ENCODE measurements at regions of chr12 and their contacts with region 1.

Region 1: GRCh38 chr12:50084775-50085614 is at the start of gene SMARCD1:
- DNase-seq: peak; percentile 66
- ATAC-seq: peak; percentile 91
- H3K4me3 ChIP-seq: peak within 1 kb of the TSS; percentile 76
- H3K27ac ChIP-seq: peak within 1 kb of the TSS; percentile 85
- H3K4me1 ChIP-seq: no peaks in the 10 kb centered on the region
- H3K27me3 ChIP-seq: no peaks in the 10 kb centered on the region
- CTCF ChIP-seq: peak; percentile 65 to 92 (median 72)
- EP300 ChIP-seq: no peak; a peak in 1 of 4 replicates
- POLR2A ChIP-seq: peak; percentile 78
- RAD21 ChIP-seq: no peak
- polyA plus RNA-seq, gene SMARCD1: 1.4 to 2.9 TPM

Region 2: DNA sequence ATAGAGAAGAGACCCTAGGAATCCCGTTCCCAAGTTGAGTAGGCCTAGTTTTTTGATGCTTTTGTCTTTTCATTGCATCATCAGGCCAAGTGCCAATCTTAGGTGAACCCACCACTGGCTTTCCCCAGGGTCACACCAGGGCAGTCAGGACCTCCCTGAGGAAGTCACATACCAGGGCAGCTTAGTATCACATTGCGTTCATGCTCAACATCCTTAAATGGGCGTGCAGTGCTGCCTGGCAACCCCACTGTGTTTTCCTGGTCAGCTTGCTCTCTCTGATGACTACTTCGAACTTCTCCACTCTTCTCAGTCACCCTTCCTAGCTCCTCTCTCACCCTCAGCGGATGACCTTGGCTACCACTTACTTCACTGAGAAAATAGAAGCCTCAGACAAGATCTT is 18.6 kb before region 1 on chr12:
- CTCF ChIA-PET with region 1: interaction called, 21 read pairs
- POLR2A ChIA-PET with region 1: no interaction called
- RAD21 ChIA-PET with region 1: interaction called, 3 read pairs
- SMC1A ChIA-PET with region 1: interaction called, 6 read pairs
- in situ Hi-C with region 1: no loop called
- intact Hi-C with region 1: no loop called
- DNase-seq: no peak
- ATAC-seq: peak; percentile 65
- H3K4me3 ChIP-seq: no peak overlapping the region
- H3K27ac ChIP-seq: no peak overlapping the region
- H3K4me1 ChIP-seq: no peaks in the 10 kb centered on the region
- H3K27me3 ChIP-seq: no peaks in the 10 kb centered on the region; a peak in 2 of 4 replicates
- CTCF ChIP-seq: no peak
- EP300 ChIP-seq: no peak
- POLR2A ChIP-seq: no peak
- RAD21 ChIP-seq: no peak

Region 3: DNA sequence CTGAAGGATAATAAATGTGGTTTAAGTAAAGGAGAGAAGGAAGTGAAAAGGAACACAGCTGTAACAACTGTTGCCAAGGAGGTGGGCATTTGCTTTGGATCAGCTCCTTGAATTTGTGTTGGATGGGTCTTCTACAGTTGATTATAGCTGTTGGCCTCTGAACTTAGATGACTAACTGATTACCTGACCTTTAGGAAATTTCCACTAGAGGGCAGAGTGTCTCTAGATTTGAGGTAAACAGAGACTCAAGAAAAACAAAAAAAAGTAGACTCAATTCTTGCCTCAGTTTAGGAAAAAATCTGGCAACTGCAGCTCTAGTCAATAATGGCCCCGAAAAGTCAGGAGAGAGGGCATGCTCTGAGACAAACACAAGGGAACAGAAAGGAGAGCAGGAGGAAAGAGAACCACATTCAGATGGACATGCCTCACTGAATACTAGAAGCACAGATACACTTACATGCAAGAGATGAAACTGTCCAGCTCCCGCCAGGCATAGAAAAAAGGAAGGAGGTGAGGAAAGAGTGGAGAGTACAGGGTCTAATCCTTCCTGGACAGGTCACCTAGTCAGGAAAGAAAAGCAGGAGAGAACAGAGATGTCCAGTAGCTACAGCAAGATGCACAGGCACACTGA is 47.6 kb after region 1 on chr12:
- CTCF ChIA-PET with region 1: interaction called, 21 read pairs
- POLR2A ChIA-PET with region 1: no interaction called
- RAD21 ChIA-PET with region 1: interaction called, 5 read pairs
- SMC1A ChIA-PET with region 1: interaction called, 6 read pairs
- in situ Hi-C with region 1: no loop called
- intact Hi-C with region 1: no loop called
- DNase-seq: no peak
- ATAC-seq: peak; percentile 51
- H3K4me3 ChIP-seq: no peak overlapping the region
- H3K27ac ChIP-seq: no peak overlapping the region
- H3K4me1 ChIP-seq: no peaks in the 10 kb centered on the region
- H3K27me3 ChIP-seq: no peaks in the 10 kb centered on the region
- CTCF ChIP-seq: peak; percentile 37 to 47 (median 46); a peak in 4 of 6 replicates
- EP300 ChIP-seq: no peak
- POLR2A ChIP-seq: no peak
- RAD21 ChIP-seq: peak; percentile 48

Region 4: GRCh38 chr12:50174971-50175715 is 90.1 kb after region 1 on chr12:
- CTCF ChIA-PET with region 1: interaction called, 97 read pairs
- POLR2A ChIA-PET with region 1: interaction called, 5 read pairs
- RAD21 ChIA-PET with region 1: interaction called, 8 read pairs
- SMC1A ChIA-PET with region 1: interaction called, 26 read pairs
- in situ Hi-C with region 1: loop called (anchors 5 kb)
- intact Hi-C with region 1: loop called (anchors 1 kb)
- DNase-seq: no peak
- ATAC-seq: peak; percentile 34; the same call in 1 of the 3 replicates
- H3K4me3 ChIP-seq: no peak overlapping the region
- H3K27ac ChIP-seq: no peak overlapping the region
- H3K4me1 ChIP-seq: no peaks in the 10 kb centered on the region
- H3K27me3 ChIP-seq: no peaks in the 10 kb centered on the region
- CTCF ChIP-seq: peak; percentile 47 to 64 (median 53); a peak in 5 of 6 replicates
- EP300 ChIP-seq: no peak
- POLR2A ChIP-seq: no peak
- RAD21 ChIP-seq: peak; percentile 73

Measured in GM12878 (cell line).